Testis (tissue), 5 donors: ENCODE measurements at regions of chr7 and their contacts with region 1.

Region 1: DNA sequence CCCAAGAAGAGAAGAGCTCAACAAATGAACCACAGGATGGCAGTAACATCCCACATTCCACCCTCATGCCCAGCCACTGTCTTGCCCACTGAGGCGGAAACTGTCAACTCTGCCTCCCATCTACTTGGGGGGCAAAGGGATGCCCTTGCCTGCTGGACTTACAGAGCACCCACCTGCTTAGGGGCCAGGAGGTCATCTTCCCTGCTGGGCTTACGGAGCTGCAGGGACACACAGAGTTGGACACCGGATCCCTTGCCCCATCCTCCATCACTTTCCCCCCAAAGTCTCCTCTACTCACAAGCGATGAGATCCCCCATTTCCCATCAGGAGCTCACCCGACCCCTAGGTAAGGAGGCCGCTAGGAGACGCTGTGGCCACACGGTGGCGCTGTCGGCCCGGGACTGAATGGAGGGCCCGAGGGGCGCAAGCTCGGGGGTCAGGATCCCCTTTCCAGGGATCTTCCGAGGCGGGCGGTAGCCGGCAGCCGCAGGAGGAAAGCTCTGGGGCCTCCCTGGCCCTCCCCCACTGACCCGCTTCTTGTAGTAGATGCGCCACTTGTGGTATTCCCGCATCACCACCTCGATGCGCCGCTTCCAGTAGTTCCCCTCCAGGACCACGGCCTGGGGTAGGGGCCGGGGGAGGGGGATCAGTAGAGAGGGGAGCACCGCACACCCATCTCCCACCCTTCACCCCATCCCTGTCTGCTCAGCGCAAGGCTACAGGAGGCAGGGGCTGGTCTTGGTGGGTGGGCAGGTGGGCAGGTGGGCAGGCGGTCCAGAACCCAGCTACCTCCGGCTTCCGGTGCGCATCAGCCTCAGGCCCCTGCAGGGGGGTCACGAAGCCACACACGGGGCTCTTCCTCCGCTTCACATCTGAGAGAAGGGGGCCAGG is 17.3 kb downstream of the MLXIPL start:
- DNase-seq: peak; percentile 70
- H3K4me3 ChIP-seq: peak overlapping the region; percentile 34 to 44
- H3K27ac ChIP-seq: no peak overlapping the region
- H3K4me1 ChIP-seq: no peaks in the 10 kb centered on the region
- H3K27me3 ChIP-seq: no peaks in the 10 kb centered on the region
- CTCF ChIP-seq: peak; percentile 85 to 95 (median 91)
- POLR2A ChIP-seq: no peak

Region 2: DNA sequence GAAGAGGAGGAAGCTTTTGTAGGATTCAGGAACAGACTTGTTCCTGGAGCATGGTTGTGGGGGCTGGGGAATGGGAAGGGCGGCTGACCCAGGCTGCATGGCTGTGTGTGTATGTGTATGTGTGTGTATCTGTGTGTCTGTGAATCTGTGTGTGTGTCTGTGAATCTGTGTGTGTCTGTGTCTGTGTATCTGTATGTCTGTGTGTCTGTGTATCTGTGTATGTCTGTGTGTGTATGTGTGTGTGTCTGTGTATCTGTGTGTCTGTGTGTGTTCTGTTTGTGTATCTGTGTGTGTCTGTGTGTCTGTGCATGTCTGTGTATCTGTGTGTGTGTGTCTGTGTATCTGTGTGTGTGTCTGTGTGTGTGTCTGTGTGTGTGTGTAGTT is 119.0 kb after region 1 on chr7:
- intact Hi-C with region 1: loop called (anchors 5 kb)
- DNase-seq: no peak
- H3K4me3 ChIP-seq: no peak overlapping the region
- H3K27ac ChIP-seq: no peak overlapping the region
- H3K4me1 ChIP-seq: peaks cover 5% of the 10 kb centered on the region
- H3K27me3 ChIP-seq: no peaks in the 10 kb centered on the region
- CTCF ChIP-seq: no peak
- POLR2A ChIP-seq: no peak